GM10248 (cell line): ENCODE measurements at regions of chr19 and their contacts with region 1.

Region 1: GRCh38 chr19:13588957-13589833 is 82.9 kb upstream of the CACNA1A start:
- DNase-seq: peak; percentile 85
- CTCF ChIP-seq: peak; percentile 94

Region 2: DNA sequence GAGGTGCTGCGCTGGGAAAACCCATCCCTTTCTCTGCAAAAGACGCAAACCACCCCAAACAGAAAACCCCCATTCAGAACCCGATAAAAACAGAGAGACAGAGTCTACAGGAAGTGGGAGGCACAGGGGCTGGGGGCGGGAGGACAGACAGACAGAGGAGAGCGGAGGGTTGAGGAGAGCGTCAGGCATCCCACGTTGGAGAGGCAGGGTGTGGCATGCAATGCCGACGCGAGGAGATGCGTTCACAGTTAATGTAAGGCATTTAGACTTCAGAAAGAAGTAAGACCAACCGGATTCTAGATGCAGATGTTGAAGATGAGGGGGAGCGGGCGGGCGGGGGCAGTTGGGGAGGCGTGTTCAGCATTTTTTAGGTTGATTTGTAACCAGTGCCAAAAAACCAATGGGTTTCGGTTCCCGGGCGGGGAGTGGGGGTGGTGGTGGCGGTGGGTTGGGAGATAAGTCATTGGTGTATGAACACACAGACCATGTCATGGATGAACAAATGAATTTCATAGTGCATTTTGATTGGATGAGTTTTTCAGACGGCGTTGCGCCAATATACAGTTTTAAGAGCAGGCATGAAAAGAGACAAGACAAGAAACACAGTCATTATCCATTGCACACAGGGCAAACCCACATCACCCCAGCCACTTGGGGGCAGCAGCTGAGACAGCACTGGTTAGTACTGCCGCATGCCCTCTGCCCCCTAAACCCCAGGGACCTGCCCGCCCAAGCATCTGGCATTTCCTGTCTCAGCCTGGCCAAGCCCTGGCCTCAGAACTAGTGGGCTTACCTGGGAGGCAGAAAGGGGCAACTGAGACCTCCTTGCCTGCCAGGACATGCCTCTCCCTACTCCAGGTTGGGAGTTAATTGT is 347.7 kb before region 1 on chr19:
- CTCF ChIA-PET with region 1: no interaction called
- POLR2A ChIA-PET with region 1: no interaction called
- DNase-seq: no peak
- CTCF ChIP-seq: no peak

Region 3: GRCh38 chr19:13466697-13467096 is 122.5 kb before region 1 on chr19:
- CTCF ChIA-PET with region 1: no interaction called
- POLR2A ChIA-PET with region 1: no interaction called
- DNase-seq: no peak
- CTCF ChIP-seq: no peak

Region 4: DNA sequence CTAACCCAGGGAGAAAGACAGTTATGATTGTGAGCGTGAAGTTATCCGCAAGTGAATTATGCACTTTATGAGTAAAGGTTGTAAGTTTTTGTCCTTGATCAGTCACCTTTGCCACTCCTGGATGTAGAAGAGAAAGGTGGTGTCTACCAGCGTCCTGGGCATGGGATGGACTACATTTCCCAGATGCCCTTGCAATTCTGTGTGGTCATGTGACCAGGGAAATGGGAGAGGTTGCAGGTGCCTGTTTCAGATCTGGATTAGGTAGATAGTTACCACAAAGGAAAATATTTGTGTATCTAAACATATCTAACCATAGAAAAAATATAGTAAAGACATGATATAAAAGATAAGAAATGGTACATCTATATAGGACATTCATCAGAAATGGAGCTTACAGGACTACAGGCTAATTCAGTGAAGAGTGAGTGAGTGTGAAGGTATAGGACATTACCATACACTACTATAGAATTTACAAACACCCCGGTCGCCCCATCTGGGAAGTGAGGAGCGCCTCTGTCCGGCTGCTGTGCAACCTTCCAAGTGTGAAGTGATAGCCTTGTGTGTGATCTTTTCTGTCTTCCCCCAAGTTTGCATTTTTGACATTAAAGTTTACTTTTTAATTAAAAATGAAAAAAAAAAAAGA is 31.3 kb before region 1 on chr19:
- CTCF ChIA-PET with region 1: no interaction called
- POLR2A ChIA-PET with region 1: no interaction called
- DNase-seq: no peak
- CTCF ChIP-seq: no peak

Region 5: DNA sequence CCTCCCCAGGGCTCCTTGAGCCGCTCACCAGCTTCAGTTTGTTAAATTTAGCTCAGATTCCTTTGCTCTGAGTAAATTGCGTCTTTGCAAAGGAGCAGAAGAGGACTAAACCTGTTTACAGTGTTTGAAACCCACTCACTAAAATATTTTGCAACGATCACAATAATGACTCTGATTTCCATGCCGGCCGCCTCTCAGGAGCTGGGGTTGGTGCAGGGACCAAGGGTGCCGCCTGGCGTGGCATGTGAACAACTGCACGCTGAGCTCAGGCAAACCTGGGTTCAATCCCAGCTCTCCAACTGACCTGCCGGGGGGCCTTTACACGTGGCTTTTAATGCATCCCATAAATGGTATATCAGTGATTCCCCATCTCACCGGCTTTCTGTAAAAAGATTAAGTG is 14.3 kb before region 1 on chr19:
- CTCF ChIA-PET with region 1: interaction called, 32 read pairs
- POLR2A ChIA-PET with region 1: no interaction called
- DNase-seq: no peak
- CTCF ChIP-seq: peak; percentile 33

Region 6: GRCh38 chr19:13604902-13605586 is 15.8 kb after region 1 on chr19:
- CTCF ChIA-PET with region 1: interaction called, 15 read pairs
- POLR2A ChIA-PET with region 1: no interaction called
- DNase-seq: no peak
- CTCF ChIP-seq: no peak

Region 7: DNA sequence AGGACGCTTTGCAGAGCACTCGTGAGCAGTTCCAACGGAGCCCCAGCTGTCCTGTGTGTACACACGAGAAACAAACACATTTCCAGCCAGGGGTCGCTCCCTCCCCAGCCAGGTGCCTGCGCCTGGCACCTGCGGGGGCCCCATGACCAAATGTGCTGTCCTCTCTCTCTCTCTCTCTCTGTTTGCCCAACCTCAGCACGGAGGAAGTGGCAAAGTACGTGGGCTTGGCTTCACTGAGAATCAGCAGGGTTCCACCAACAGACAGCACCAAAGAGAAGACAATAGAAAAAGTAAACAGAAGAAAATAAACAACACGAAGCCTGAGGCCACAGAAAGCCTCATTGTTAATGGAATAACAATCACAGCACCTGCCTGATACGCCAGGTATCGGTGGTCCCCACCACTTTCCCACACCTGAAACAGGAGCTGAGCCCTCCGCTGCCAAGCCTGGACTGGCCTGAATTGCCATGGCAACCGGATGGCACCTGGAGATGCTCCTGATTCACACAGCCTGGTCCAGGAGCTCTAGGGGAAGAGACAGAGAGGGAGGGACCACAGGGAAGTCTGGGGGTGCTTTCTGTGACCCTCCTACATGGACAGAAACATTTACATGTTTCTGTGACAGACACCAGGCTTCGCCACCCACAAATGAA is 21.0 kb after region 1 on chr19:
- CTCF ChIA-PET with region 1: interaction called, 15 read pairs
- POLR2A ChIA-PET with region 1: no interaction called
- DNase-seq: no peak
- CTCF ChIP-seq: no peak

Region 8: DNA sequence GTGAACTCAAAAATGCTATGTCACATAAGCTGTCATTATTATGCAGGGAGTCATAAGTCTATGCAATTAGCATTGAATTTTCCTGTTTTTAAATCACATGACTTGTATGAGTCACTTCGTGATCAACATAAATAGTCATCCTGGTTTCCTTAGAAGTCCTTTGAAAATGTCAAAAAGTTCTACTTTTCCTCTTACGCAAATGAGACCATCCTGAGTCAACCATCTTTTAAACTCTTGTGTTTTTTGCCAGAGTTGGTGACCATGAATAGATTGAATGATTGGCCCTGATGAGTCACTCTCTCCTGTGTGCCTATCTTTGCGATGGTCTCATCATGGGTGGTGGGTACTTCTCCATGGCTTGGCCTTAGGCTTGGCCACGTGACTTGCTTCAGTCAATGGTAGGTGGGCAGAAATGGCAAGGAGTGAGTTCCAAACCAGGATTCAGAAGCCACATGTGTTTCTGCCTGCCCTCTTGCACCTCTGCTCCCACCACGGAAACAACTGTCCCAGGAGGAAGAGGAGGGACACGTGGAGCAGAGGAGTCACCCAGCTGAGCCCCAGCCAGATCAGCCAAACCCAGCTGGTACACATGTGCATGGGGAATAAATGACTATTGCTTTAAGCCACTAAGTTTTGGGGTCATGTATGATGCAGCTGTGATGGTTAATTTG is 40.6 kb after region 1 on chr19:
- CTCF ChIA-PET with region 1: no interaction called
- POLR2A ChIA-PET with region 1: no interaction called
- DNase-seq: no peak
- CTCF ChIP-seq: no peak